Mammary epithelial cell (primary cell): ENCODE measurements at regions of chr22 and their contacts with region 1.

Region 1: GRCh38 chr22:39384750-39385480 is 14.7 kb upstream of the TAB1 start:
- DNase-seq: no peak
- H3K4me3 ChIP-seq: no peak overlapping the region
- H3K27ac ChIP-seq: no peak overlapping the region
- H3K4me1 ChIP-seq: peaks cover 5% of the 10 kb centered on the region
- H3K27me3 ChIP-seq: no peaks in the 10 kb centered on the region
- CTCF ChIP-seq: peak in 1 of 2 donors; percentile 2

Region 2: GRCh38 chr22:39349967-39350726 is 34.8 kb before region 1 on chr22 and contains the start of gene SYNGR1:
- CTCF ChIA-PET with region 1: no interaction called
- dilution Hi-C with region 1: no loop called
- in situ Hi-C with region 1: no loop called
- intact Hi-C with region 1: no loop called
- DNase-seq: no peak
- H3K4me3 ChIP-seq: peak within 1 kb of the TSS in 2 of 3 experiments; percentile 43 to 50
- H3K27ac ChIP-seq: no peak within 1 kb of the TSS
- H3K4me1 ChIP-seq: peaks cover 17% of the 10 kb centered on the region
- H3K27me3 ChIP-seq: peaks cover 4% of the 10 kb centered on the region
- CTCF ChIP-seq: no peak
- total RNA-seq, gene SYNGR1: 0.89 to 1.5 TPM

Region 3: GRCh38 chr22:39364714-39365491 is 20.0 kb before region 1 on chr22:
- CTCF ChIA-PET with region 1: no interaction called
- dilution Hi-C with region 1: no loop called
- in situ Hi-C with region 1: no loop called
- intact Hi-C with region 1: no loop called
- DNase-seq: no peak
- H3K4me3 ChIP-seq: no peak overlapping the region
- H3K27ac ChIP-seq: no peak overlapping the region
- H3K4me1 ChIP-seq: peaks cover 6% of the 10 kb centered on the region
- H3K27me3 ChIP-seq: no peaks in the 10 kb centered on the region
- CTCF ChIP-seq: no peak

Region 4: GRCh38 chr22:39462443-39463221 is 77.7 kb after region 1 on chr22:
- CTCF ChIA-PET with region 1: no interaction called
- dilution Hi-C with region 1: loop called (anchors 5 kb)
- in situ Hi-C with region 1: no loop called
- intact Hi-C with region 1: no loop called
- DNase-seq: no peak
- H3K4me3 ChIP-seq: no peak overlapping the region
- H3K27ac ChIP-seq: no peak overlapping the region
- H3K4me1 ChIP-seq: no peaks in the 10 kb centered on the region
- H3K27me3 ChIP-seq: peaks cover 12% of the 10 kb centered on the region
- CTCF ChIP-seq: no peak